MCF 10A (cell line): ENCODE measurements at regions of chr12 and their contacts with region 1.

Region 1: GRCh38 chr12:117836999-117837736 is 131.6 kb downstream of the KSR2 start:
- DNase-seq: peak; percentile 80
- H3K4me3 Mint-ChIP-seq: no peak overlapping the region
- H3K27ac Mint-ChIP-seq: no peak overlapping the region
- H3K4me1 Mint-ChIP-seq: peaks cover 7% of the 10 kb centered on the region
- H3K27me3 Mint-ChIP-seq: peaks cover 33% of the 10 kb centered on the region
- CTCF ChIP-seq: peak; percentile 93

Region 2: GRCh38 chr12:117360551-117361346 is 476.4 kb before region 1 on chr12:
- CTCF ChIA-PET with region 1: interaction called, 262 read pairs
- POLR2A ChIA-PET with region 1: interaction called, 3 read pairs
- intact Hi-C with region 1: no loop called
- DNase-seq: no peak
- H3K4me3 Mint-ChIP-seq: no peak overlapping the region
- H3K27ac Mint-ChIP-seq: no peak overlapping the region
- H3K4me1 Mint-ChIP-seq: peaks cover 7% of the 10 kb centered on the region
- H3K27me3 Mint-ChIP-seq: peaks cover 38% of the 10 kb centered on the region
- CTCF ChIP-seq: no peak

Region 3: DNA sequence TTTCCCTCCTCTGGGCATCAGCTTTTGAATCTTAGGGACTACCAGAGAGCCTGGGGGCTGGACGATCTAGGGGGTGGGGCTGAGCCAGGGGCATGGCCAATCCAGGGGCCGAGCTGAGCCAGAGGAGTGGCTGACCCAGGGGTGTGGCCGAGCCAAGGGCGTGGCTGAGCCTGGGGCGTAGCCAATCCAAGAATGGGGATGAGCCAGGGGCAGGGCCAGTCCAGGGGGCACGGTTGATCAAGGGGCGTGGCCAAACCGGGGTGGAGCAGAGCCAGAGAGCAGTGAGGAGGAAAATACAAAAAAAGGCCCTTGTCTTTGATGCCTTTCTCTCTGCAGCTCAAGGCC is 256.5 kb before region 1 on chr12:
- CTCF ChIA-PET with region 1: interaction called, 67 read pairs
- POLR2A ChIA-PET with region 1: no interaction called
- intact Hi-C with region 1: no loop called
- DNase-seq: peak; percentile 60
- H3K4me3 Mint-ChIP-seq: no peak overlapping the region
- H3K27ac Mint-ChIP-seq: no peak overlapping the region
- H3K4me1 Mint-ChIP-seq: no peaks in the 10 kb centered on the region
- H3K27me3 Mint-ChIP-seq: peaks cover 15% of the 10 kb centered on the region
- CTCF ChIP-seq: no peak

Region 4: GRCh38 chr12:117671734-117672133 is 165.4 kb before region 1 on chr12:
- CTCF ChIA-PET with region 1: interaction called, 12 read pairs
- POLR2A ChIA-PET with region 1: no interaction called
- intact Hi-C with region 1: loop called (anchors 5 kb)
- DNase-seq: peak; percentile 52
- H3K4me3 Mint-ChIP-seq: no peak overlapping the region
- H3K27ac Mint-ChIP-seq: no peak overlapping the region
- H3K4me1 Mint-ChIP-seq: no peaks in the 10 kb centered on the region
- H3K27me3 Mint-ChIP-seq: peaks cover 40% of the 10 kb centered on the region
- CTCF ChIP-seq: peak; percentile 53

Region 5: DNA sequence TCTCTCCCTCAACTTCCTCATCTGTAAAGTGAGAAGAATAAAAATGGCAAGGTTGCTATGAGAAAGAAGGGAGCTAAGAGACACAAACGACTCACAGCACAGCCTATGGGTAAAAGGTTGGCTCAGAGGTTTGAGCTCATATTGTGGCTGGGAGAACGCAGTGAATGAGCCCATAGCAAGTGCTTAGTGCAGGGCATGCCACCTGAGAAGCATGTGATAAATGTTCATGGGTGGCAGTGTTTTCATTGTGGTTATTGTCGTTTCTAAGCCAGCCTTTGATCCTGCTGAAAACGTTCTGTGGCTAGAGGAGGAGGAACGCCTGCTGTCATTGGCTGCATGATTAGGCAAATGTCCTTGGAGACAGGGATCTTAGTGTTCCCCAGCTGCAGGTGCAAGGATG is 18.8 kb before region 1 on chr12:
- CTCF ChIA-PET with region 1: interaction called, 22 read pairs
- POLR2A ChIA-PET with region 1: no interaction called
- intact Hi-C with region 1: no loop called
- DNase-seq: no peak
- H3K4me3 Mint-ChIP-seq: no peak overlapping the region
- H3K27ac Mint-ChIP-seq: peak overlapping the region; percentile 37
- H3K4me1 Mint-ChIP-seq: peaks cover 18% of the 10 kb centered on the region
- H3K27me3 Mint-ChIP-seq: no peaks in the 10 kb centered on the region
- CTCF ChIP-seq: no peak